ENCODE measurements at regions of chr1 and their contacts with region 1.

Region 1: GRCh38 chr1:28602536-28603439 is 10.7 kb downstream of the RAB42 start:
- DNase-seq: peak in 4 of 9 experiments; percentile 24 to 62 (median 46)
- ATAC-seq: no peak
- H3K4me3 ChIP-seq: no peak overlapping the region
- H3K4me3 Mint-ChIP-seq: no peak overlapping the region
- H3K27ac ChIP-seq: no peak overlapping the region
- H3K27ac Mint-ChIP-seq: no peak overlapping the region
- H3K4me1 ChIP-seq: no peaks in the 10 kb centered on the region
- H3K4me1 Mint-ChIP-seq: no peaks in the 10 kb centered on the region
- H3K27me3 ChIP-seq: no peaks in the 10 kb centered on the region
- H3K27me3 Mint-ChIP-seq: no peaks in the 10 kb centered on the region
- CTCF ChIP-seq: peak; percentile 31

Region 2: GRCh38 chr1:28359592-28360239 is 243.1 kb before region 1 on chr1:
- CTCF ChIA-PET with region 1: interaction called, 6 read pairs
- POLR2A ChIA-PET with region 1: no interaction called
- intact Hi-C with region 1: loop called in 1 of 2 experiments (anchors 1 kb)
- DNase-seq: peak; percentile 50 to 83 (median 75)
- ATAC-seq: peak; percentile 75
- H3K4me3 ChIP-seq: no peak overlapping the region
- H3K4me3 Mint-ChIP-seq: no peak overlapping the region
- H3K27ac ChIP-seq: no peak overlapping the region
- H3K27ac Mint-ChIP-seq: no peak overlapping the region
- H3K4me1 ChIP-seq: no peaks in the 10 kb centered on the region
- H3K4me1 Mint-ChIP-seq: peaks cover 2% of the 10 kb centered on the region
- H3K27me3 ChIP-seq: no peaks in the 10 kb centered on the region
- H3K27me3 Mint-ChIP-seq: no peaks in the 10 kb centered on the region
- CTCF ChIP-seq: peak; percentile 79

Region 3: DNA sequence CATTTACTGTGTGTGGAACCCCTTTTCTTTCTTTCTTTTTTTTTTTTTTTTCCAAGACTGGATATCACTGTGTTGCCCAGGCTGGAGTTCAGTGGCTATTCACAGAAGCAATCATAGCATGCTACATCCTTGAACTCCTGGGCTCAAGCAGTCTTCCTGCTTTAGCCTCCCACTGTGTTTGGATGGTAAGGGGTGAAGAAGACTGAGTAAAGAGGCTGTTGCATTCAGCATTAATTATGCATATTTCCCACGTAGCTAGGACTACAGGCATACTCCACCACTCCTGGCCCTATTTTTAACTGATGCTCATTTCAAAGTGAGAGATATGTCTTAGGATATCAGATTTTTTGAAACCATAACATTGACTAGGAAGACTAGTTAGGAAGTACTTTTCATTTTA is 193.7 kb before region 1 on chr1:
- CTCF ChIA-PET with region 1: interaction called, 3 read pairs
- POLR2A ChIA-PET with region 1: no interaction called
- intact Hi-C with region 1: loop called in 1 of 2 experiments (anchors 2 kb)
- DNase-seq: no peak
- ATAC-seq: no peak
- H3K4me3 ChIP-seq: no peak overlapping the region
- H3K4me3 Mint-ChIP-seq: no peak overlapping the region
- H3K27ac ChIP-seq: no peak overlapping the region
- H3K27ac Mint-ChIP-seq: no peak overlapping the region
- H3K4me1 ChIP-seq: no peaks in the 10 kb centered on the region
- H3K4me1 Mint-ChIP-seq: peaks cover 11% of the 10 kb centered on the region
- H3K27me3 ChIP-seq: no peaks in the 10 kb centered on the region
- H3K27me3 Mint-ChIP-seq: no peaks in the 10 kb centered on the region
- CTCF ChIP-seq: no peak

Region 4: GRCh38 chr1:28518000-28518744 is 84.6 kb before region 1 on chr1:
- CTCF ChIA-PET with region 1: interaction called, 5 read pairs
- POLR2A ChIA-PET with region 1: no interaction called
- intact Hi-C with region 1: loop called (anchors 1 kb)
- DNase-seq: peak; percentile 76 to 93 (median 88)
- ATAC-seq: peak; percentile 91
- H3K4me3 ChIP-seq: peak overlapping the region; percentile 59 to 79
- H3K4me3 Mint-ChIP-seq: peak overlapping the region; percentile 89
- H3K27ac ChIP-seq: peak overlapping the region; percentile 55 to 57
- H3K27ac Mint-ChIP-seq: peak overlapping the region; percentile 84
- H3K4me1 ChIP-seq: peaks cover 21% of the 10 kb centered on the region
- H3K4me1 Mint-ChIP-seq: peaks cover 28% of the 10 kb centered on the region
- H3K27me3 ChIP-seq: no peaks in the 10 kb centered on the region
- H3K27me3 Mint-ChIP-seq: no peaks in the 10 kb centered on the region
- CTCF ChIP-seq: peak; percentile 98

Region 5: GRCh38 chr1:28914228-28915030 is 311.6 kb after region 1 on chr1 and contains the start of gene EPB41:
- CTCF ChIA-PET with region 1: no interaction called
- POLR2A ChIA-PET with region 1: no interaction called
- intact Hi-C with region 1: no loop called
- DNase-seq: peak; percentile 76 to 96 (median 94)
- ATAC-seq: peak; percentile 77
- H3K4me3 ChIP-seq: peak within 1 kb of the TSS; percentile 80 to 86
- H3K4me3 Mint-ChIP-seq: peak within 1 kb of the TSS; percentile 99
- H3K27ac ChIP-seq: peak within 1 kb of the TSS; percentile 62 to 77
- H3K27ac Mint-ChIP-seq: peak within 1 kb of the TSS; percentile 98
- H3K4me1 ChIP-seq: peaks cover 40% of the 10 kb centered on the region
- H3K4me1 Mint-ChIP-seq: peaks cover 49% of the 10 kb centered on the region
- H3K27me3 ChIP-seq: no peaks in the 10 kb centered on the region
- H3K27me3 Mint-ChIP-seq: no peaks in the 10 kb centered on the region
- CTCF ChIP-seq: no peak
- total RNA-seq, gene EPB41: 109 to 117 TPM

Measured in CD8-positive, alpha-beta T cell (primary cell).